Dorsolateral prefrontal cortex (tissue), 120 donors: ENCODE measurements at regions of chr4 and their contacts with region 1.

Region 1: GRCh38 chr4:98995183-98996055 is at the start of gene METAP1:
- DNase-seq: peak; percentile 74 to 93 (median 89)
- H3K4me3 ChIP-seq: peak within 1 kb of the TSS; percentile 64 to 99 (median 95)
- H3K27ac ChIP-seq: peak within 1 kb of the TSS; percentile 54 to 95 (median 89)
- H3K27me3 ChIP-seq: no peaks in the 10 kb centered on the region
- CTCF ChIP-seq: peak; percentile 36 to 86 (median 69)
- total RNA-seq, gene METAP1: 18.4 to 48.4 (median 31.7) TPM

Region 2: DNA sequence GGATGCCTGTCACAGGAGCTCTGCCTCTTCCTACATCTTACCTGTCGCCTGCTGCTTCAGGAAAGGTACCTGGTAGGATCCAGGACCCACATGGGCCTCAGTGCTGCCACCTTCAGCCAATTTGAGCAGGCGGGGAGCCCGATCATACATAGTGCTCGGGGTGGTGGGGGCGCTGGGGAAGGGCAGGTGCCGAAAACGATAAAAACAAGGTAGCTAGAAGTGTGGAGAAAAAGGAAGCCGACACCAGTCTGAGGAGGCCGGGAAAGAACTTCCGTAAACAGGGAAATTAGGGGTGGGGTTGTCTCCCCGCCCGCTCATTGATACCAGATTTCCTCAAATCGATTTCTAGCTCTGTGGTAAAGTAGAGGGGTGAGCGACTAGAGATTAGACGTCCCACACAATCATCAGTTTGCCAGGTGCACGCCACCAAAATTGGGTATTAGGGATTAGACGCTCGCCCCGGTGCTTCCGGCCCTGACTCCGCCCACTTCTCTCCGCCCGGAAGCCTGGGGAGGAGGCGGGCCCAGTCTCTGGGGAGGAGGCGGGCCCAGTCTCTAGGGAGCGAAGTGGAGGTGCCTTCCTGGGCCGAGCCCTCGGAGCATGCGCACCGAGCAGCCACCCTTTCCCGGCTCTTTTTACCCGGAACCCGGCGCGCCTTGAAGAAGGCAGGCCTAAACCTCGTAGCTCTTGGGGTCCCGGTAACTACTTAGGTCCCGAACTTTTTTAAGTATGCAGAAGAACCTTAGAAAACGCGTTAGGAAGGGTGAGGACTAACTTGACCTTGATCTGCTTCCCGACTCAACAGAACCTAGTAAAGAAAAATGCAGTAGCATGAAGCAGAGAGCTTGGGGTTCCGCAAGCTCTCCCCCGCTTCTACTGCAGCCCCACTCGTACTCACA is 852.2 kb before region 1 on chr4 and contains the start of gene STPG2:
- intact Hi-C with region 1: loop called in 1 of 2 experiments (anchors 10 kb)
- DNase-seq: peak; percentile 77 to 96 (median 92)
- H3K4me3 ChIP-seq: peak within 1 kb of the TSS; percentile 57 to 95 (median 77)
- H3K27ac ChIP-seq: peak within 1 kb of the TSS; percentile 59 to 96 (median 90)
- H3K27me3 ChIP-seq: no peaks in the 10 kb centered on the region
- CTCF ChIP-seq: peak in 54 of 56 donors; percentile 12 to 66 (median 49)
- total RNA-seq, gene STPG2: 0.65 to 5.0 (median 2.1) TPM in 119 of 120 experiments, not detected in the other

Region 3: GRCh38 chr4:98658287-98659105 is 336.9 kb before region 1 on chr4 and contains the start of gene TSPAN5:
- intact Hi-C with region 1: loop called in 1 of 2 experiments (anchors 1 kb)
- DNase-seq: peak; percentile 56 to 90 (median 76)
- H3K4me3 ChIP-seq: peak within 1 kb of the TSS; percentile 59 to 96 (median 86)
- H3K27ac ChIP-seq: peak within 1 kb of the TSS; percentile 78 to 98 (median 94)
- H3K27me3 ChIP-seq: no peaks in the 10 kb centered on the region
- CTCF ChIP-seq: peak in 12 of 56 donors; percentile 3 to 35 (median 10)
- total RNA-seq, gene TSPAN5: 56.5 to 140 (median 109) TPM

Region 4: DNA sequence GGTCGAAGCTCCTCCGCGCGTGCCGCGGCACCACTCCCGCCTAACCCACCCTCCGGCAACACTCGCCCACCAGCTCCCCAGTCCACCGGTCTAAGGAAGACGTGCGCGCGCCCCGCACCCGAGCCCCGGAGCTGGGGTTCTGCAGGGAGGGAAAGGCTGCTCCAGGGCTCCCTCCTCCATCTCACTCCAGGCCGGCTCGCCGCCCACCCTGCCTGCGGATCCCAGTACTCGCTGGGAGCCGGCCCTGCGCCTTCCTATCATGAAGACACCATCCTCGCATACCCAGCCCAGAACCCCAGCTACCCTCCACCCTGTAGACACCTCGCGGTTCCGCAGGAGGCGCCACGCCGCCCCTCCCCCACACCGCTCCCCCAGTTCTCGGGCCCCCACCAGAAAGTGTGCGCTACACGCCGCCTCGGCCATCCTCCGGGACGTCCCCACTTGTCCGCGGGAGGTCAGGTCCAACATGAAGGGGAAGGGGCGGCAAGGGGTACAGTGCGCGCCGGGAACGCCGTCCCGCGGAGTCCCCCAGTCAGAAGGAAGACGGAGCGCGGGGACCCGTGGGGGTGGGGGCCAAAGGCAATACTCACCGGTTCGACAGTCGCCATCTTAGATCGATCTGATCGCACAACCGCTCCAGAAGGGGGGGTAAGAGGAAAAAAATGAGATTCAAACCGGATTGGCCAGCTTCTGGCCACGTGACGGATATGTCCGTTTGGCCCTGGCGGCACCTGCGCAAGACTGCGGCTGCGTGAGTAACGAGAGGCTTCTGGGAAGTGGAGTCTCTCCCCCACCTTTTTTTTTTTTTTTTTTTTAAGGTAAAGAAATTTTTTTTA is 66.7 kb before region 1 on chr4 and contains the start of gene EIF4E:
- intact Hi-C with region 1: loop called (anchors 1 to 2 kb)
- DNase-seq: peak; percentile 88 to 97 (median 94)
- H3K4me3 ChIP-seq: peak within 1 kb of the TSS; percentile 70 to 98 (median 90)
- H3K27ac ChIP-seq: peak within 1 kb of the TSS; percentile 76 to 99 (median 95)
- H3K27me3 ChIP-seq: no peaks in the 10 kb centered on the region
- CTCF ChIP-seq: peak in 23 of 56 donors; percentile 1 to 62 (median 13)
- total RNA-seq, gene EIF4E: 56.2 to 162 (median 97.3) TPM

Region 5: GRCh38 chr4:99088481-99089365 is 93.3 kb after region 1 on chr4 and contains the start of gene ADH5:
- intact Hi-C with region 1: loop called in 1 of 2 experiments (anchors 5 kb)
- DNase-seq: peak; percentile 61 to 86 (median 80)
- H3K4me3 ChIP-seq: peak within 1 kb of the TSS; percentile 52 to 91 (median 79)
- H3K27ac ChIP-seq: peak within 1 kb of the TSS; percentile 52 to 96 (median 89)
- H3K27me3 ChIP-seq: no peaks in the 10 kb centered on the region
- CTCF ChIP-seq: peak in 12 of 56 donors; percentile 5 to 27 (median 12)
- total RNA-seq, gene ADH5: 53.3 to 92.9 (median 74.8) TPM

Region 6: GRCh38 chr4:99117876-99118693 is 122.7 kb after region 1 on chr4:
- intact Hi-C with region 1: no loop called
- DNase-seq: no peak
- H3K4me3 ChIP-seq: no peak overlapping the region
- H3K27ac ChIP-seq: no peak overlapping the region
- H3K27me3 ChIP-seq: no peaks in the 10 kb centered on the region
- CTCF ChIP-seq: peak in 55 of 56 donors; percentile 25 to 79 (median 54)

Region 7: DNA sequence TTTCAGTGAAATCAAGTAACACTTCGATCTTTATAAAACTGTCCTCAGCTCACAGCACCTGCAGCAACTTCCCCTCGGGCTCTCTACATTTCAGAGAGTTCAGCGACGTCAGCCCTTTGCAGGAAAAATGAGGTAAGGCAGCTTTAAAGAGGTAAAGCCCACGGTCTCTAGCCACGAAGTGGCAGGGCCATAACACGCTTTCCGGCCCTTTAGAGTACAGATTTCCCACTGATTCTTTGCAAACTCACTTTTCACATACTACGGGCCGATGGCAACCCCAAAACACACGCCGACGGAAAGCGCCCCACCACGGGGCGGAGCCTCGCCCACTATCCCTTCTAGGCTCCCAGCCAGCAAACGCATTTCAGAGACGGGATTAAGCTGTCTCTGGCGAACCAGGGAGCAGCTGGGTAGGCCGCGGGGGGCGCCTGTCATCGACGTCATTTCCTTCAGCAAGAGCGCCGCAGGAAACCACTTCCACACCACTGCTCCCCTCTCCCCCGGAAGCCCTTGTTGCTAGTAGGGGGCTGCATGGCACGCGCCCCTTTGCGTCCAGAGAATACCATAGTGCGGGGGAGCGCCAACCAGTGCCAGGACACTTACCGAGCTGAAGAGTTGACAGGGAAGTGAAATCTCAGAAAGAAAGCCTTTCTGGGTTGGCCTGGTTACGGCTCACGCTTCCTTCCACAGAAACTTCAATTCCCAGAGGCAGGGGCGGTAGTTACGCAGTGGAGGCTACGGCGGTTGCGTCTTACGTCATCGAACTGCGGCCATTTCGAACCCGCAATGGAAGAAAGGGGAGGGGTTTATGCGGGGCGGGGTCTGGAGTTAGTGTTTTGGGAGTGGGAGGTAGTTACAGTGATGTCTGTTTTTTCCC is 568.1 kb after region 1 on chr4 and contains the start of gene TRMT10A:
- intact Hi-C with region 1: loop called in 1 of 2 experiments (anchors 10 kb)
- DNase-seq: peak; percentile 97 to 99 (median 98)
- H3K4me3 ChIP-seq: peak within 1 kb of the TSS; percentile 60 to 96 (median 84)
- H3K27ac ChIP-seq: peak within 1 kb of the TSS; percentile 85 to 99 (median 97)
- H3K27me3 ChIP-seq: peaks cover 0 to 5% (median 0%) of the 10 kb centered on the region in 45 donors
- CTCF ChIP-seq: peak in 38 of 56 donors; percentile 8 to 50 (median 33)
- total RNA-seq, gene TRMT10A: 2.0 to 11.6 (median 5.3) TPM